Activated B cell treated with CpG ODN at 0.5 μM for 24 hours (primary cell): ENCODE measurements at regions of chr1 and their contacts with region 1.

Region 1: DNA sequence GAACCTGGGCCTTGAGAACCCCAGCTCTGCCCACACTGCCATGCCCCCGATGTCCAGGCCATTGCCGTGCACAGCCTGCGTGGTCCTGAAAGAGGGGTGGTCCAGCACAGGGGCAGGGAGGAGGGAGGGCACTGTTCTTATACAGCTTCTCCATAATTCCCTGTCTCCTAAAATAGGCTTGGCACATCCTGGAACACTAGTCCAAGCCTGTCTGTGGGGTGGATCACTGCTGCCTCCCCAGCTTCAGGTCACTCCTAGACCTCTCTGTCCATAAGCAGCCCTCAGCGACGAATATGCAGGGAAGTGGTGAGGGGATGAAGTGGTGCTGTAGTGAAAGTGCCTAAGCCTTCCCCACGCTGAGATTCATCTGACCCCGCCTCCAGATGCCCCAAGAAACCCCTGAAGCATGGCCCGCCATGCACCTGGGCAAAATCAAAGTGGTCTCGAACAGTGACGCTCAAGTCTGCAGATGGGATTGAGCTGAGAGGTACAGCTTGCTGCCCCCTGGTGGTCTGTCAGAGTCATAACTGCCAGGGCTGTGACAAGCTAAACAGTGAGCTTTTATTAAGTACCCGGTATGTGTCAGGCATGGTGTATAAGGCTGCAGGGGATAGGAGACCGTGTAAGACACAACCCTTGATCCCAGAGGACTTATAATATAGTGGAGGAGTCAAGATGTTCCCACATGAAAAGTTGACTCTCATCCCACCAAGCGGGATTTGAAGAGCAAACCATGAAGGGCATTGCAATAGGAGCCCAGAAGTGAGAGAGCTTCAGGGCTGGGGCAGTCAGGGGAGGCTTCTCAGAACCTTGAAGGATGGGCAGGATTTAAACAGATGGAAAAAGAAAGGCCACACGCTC is 66.6 kb downstream of the FAM163A start:
- DNase-seq: peak; percentile 47
- ATAC-seq: peak; percentile 78
- H3K4me3 Mint-ChIP-seq: no peak overlapping the region
- H3K27ac Mint-ChIP-seq: no peak overlapping the region
- H3K4me1 Mint-ChIP-seq: peaks cover 11% of the 10 kb centered on the region
- H3K27me3 Mint-ChIP-seq: peaks cover 23% of the 10 kb centered on the region
- CTCF ChIP-seq: no peak

Region 2: GRCh38 chr1:179599623-179600249 is 210.0 kb before region 1 on chr1:
- CTCF ChIA-PET with region 1: no interaction called
- POLR2A ChIA-PET with region 1: no interaction called
- intact Hi-C with region 1: loop called (anchors 5 kb)
- DNase-seq: no peak
- ATAC-seq: no peak
- H3K4me3 Mint-ChIP-seq: no peak overlapping the region
- H3K27ac Mint-ChIP-seq: no peak overlapping the region
- H3K4me1 Mint-ChIP-seq: no peaks in the 10 kb centered on the region
- H3K27me3 Mint-ChIP-seq: peaks cover 11% of the 10 kb centered on the region
- CTCF ChIP-seq: no peak

Region 3: GRCh38 chr1:179706339-179706941 is 103.3 kb before region 1 on chr1:
- CTCF ChIA-PET with region 1: interaction called, 60 read pairs
- POLR2A ChIA-PET with region 1: no interaction called
- intact Hi-C with region 1: loop called (anchors 1 kb)
- DNase-seq: no peak
- ATAC-seq: no peak
- H3K4me3 Mint-ChIP-seq: no peak overlapping the region
- H3K27ac Mint-ChIP-seq: no peak overlapping the region
- H3K4me1 Mint-ChIP-seq: peaks cover 4% of the 10 kb centered on the region
- H3K27me3 Mint-ChIP-seq: peaks cover 7% of the 10 kb centered on the region
- CTCF ChIP-seq: no peak

Region 4: GRCh38 chr1:179794669-179795068 is 15.1 kb before region 1 on chr1:
- CTCF ChIA-PET with region 1: interaction called, 11 read pairs
- POLR2A ChIA-PET with region 1: no interaction called
- intact Hi-C with region 1: no loop called
- DNase-seq: no peak
- ATAC-seq: no peak
- H3K4me3 Mint-ChIP-seq: no peak overlapping the region
- H3K27ac Mint-ChIP-seq: no peak overlapping the region
- H3K4me1 Mint-ChIP-seq: no peaks in the 10 kb centered on the region
- H3K27me3 Mint-ChIP-seq: peaks cover 4% of the 10 kb centered on the region
- CTCF ChIP-seq: no peak